Head of caudate nucleus (tissue), 42 donors: ENCODE measurements at regions of chr4 and their contacts with region 1.

Region 1: DNA sequence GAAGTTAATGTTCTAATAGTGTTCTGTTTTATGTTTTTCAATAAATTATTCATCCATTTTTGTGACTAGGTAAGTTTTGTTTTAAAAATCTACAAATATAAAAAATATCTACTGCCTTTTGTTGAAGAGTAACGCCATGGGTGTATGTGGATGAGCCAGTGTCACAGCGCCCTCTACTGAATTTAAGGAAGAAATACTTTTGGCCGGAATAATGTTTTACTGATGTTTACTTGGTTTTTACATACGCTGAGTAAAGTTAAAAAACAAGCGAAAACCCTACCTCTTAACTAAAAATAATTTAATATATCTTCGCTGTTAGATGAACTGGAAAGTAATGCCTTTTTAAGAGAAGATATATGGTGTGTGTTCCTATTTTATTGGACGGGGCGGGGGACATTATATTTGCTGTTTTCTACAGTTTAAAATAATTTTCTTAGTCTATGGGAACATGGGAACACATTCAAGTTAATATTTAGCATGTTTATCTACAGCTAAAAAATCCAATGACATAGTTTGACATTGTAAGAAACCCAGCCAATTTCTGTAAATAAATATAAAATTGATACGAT is 86.1 kb downstream of the CPE start:
- DNase-seq: peak in 17 of 42 donors; percentile 9 to 64 (median 27)

Region 2: DNA sequence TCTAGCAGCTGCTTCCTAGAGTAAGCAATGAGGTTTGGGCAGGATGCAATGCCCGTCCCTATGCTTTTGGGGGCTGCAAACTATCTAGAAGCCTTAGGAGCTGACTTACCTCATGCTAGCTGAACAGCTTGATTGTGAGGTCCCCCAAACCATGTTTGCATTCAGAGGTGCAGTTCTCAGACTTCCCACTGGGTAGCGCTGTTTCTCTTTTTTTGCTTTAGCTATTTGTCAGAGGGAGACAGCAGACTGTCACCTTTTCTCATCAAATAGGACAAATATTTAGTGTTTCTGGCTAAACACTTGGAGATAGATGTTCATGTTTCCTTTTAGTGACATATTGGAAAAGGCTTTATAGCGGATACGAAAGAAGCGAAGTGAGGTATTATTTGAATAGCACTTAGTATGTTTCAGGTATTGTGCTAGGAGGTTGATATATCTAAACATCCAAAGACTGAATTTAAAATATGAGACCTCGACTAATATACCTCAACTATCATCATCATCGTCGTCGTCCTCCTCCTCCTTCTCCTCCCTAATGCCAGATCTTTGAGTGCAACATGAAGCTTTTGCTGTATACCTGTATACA is 333.6 kb before region 1 on chr4:
- intact Hi-C with region 1: loop called (anchors 5 kb)
- DNase-seq: peak in 41 of 42 donors; percentile 20 to 95 (median 82)

Region 3: GRCh38 chr4:165207431-165208220 is 257.3 kb before region 1 on chr4 and contains the start of gene KLHL2:
- intact Hi-C with region 1: loop called (anchors 10 kb)
- DNase-seq: peak; percentile 39 to 92 (median 82)

Region 4: GRCh38 chr4:165355900-165356300 is 109.0 kb before region 1 on chr4:
- intact Hi-C with region 1: loop called (anchors 10 kb)
- DNase-seq: peak in 36 of 42 donors; percentile 19 to 82 (median 60)

Region 5: GRCh38 chr4:165369522-165369921 is 95.4 kb before region 1 on chr4:
- intact Hi-C with region 1: no loop called
- DNase-seq: no peak

Region 6: GRCh38 chr4:165384598-165384997 is 80.3 kb before region 1 on chr4:
- intact Hi-C with region 1: loop called (anchors 10 kb)
- DNase-seq: no peak

Region 7: GRCh38 chr4:165621983-165622382 is 157.1 kb after region 1 on chr4:
- intact Hi-C with region 1: no loop called
- DNase-seq: no peak